ENCODE measurements at regions of chr5 and their contacts with region 1.

Region 1: GRCh38 chr5:155936520-155937406 is 390.2 kb upstream of the SGCD start:
- DNase-seq: no peak
- H3K4me3 ChIP-seq: no peak overlapping the region
- H3K27ac ChIP-seq: no peak overlapping the region
- H3K4me1 ChIP-seq: no peaks in the 10 kb centered on the region
- H3K27me3 ChIP-seq: no peaks in the 10 kb centered on the region
- CTCF ChIP-seq: no peak
- EP300 ChIP-seq: no peak
- POLR2A ChIP-seq: no peak

Region 2: GRCh38 chr5:156824800-156825199 is 888.0 kb after region 1 on chr5:
- in situ Hi-C with region 1: loop called (anchors 10 to 25 kb)
- intact Hi-C with region 1: loop called (anchors 10 kb)
- DNase-seq: no peak
- H3K4me3 ChIP-seq: no peak overlapping the region
- H3K27ac ChIP-seq: no peak overlapping the region
- H3K4me1 ChIP-seq: no peaks in the 10 kb centered on the region
- H3K27me3 ChIP-seq: no peaks in the 10 kb centered on the region
- CTCF ChIP-seq: peak; percentile 26 to 36 (median 33)
- EP300 ChIP-seq: no peak
- POLR2A ChIP-seq: no peak

Region 3: DNA sequence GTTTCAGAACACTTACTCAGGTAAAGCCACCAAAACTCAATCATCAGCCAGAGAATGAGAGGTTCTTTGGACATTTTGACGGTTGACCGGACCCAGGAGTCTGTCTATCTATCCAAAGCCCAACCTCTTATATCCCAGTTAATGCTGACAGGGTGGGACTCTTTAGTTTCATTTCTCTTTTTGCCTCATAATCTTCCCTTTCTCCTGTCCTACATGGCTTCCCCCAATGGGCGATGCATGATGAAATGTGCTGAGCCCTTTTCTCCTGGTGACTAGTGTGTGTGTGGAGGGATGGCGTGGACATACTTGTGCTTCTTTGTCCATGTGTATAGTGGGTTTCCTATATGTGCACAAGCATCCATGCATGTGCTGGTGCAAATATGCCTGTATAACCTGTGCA is 1026.4 kb after region 1 on chr5 and contains the start of gene TIMD4:
- in situ Hi-C with region 1: no loop called
- intact Hi-C with region 1: no loop called
- DNase-seq: no peak
- H3K4me3 ChIP-seq: no peak within 1 kb of the TSS
- H3K27ac ChIP-seq: no peak within 1 kb of the TSS
- H3K4me1 ChIP-seq: no peaks in the 10 kb centered on the region
- H3K27me3 ChIP-seq: no peaks in the 10 kb centered on the region
- CTCF ChIP-seq: no peak
- EP300 ChIP-seq: no peak
- POLR2A ChIP-seq: no peak
- total RNA-seq, gene TIMD4: 1.4 to 3.0 (median 2.3) TPM